Dendritic cell treated with granulocyte-macrophage colony-stimulating factor and Interleukin-4, amounts not matched to agents 40 ng/mL and 50 ng/mL, for 4 days (primary cell): ENCODE measurements at regions of chr5 and their contacts with region 1.

Region 1: DNA sequence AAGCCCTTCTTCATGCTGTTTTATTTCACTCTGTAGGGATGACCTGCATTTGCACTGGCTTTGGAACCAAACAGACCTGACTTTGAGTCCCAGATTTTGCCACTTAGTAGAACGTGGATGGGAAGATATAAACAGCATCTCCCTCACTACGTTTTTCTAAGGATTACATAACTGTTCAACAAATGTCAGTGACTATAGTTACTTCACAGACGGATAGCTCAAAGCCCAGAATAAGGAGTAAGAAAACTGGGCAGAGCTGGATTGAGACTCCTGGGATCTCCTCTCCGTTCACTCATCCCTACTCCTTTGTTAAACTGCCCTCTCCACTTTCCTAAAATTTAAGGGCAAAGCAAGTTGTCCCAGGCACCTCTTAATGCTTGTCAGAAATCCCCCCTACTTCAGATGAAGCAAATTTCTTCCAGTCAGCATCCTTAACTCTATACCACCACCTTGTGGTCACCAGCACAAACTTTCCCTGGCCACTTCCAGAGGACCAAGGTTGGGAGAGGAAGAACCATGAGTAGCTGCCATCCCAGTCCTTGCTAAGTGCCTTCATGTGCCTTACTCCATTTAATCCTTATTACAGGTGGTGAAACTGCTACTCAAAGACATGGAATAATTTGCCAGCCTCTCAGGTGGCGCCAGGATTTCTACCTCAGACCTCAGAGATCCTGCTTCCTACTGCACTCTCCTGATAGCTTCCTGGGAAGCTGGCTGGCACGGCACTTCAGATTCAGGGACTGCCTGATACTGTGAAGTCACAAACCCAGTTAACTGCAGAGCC is 38.4 kb downstream of the EGR1 start:
- H3K4me3 Mint-ChIP-seq: no peak overlapping the region
- H3K27ac Mint-ChIP-seq: no peak overlapping the region
- H3K4me1 Mint-ChIP-seq: no peaks in the 10 kb centered on the region
- H3K27me3 Mint-ChIP-seq: no peaks in the 10 kb centered on the region

Region 2: GRCh38 chr5:138274189-138274853 is 229.4 kb before region 1 on chr5 and contains the start of gene GFRA3:
- intact Hi-C with region 1: no loop called
- H3K4me3 Mint-ChIP-seq: peak within 1 kb of the TSS; percentile 15
- H3K27ac Mint-ChIP-seq: no peak within 1 kb of the TSS
- H3K4me1 Mint-ChIP-seq: peaks cover 6% of the 10 kb centered on the region
- H3K27me3 Mint-ChIP-seq: peaks cover 30% of the 10 kb centered on the region

Region 3: GRCh38 chr5:138449501-138450239 is 54.0 kb before region 1 on chr5:
- intact Hi-C with region 1: loop called (anchors 1 kb)
- H3K4me3 Mint-ChIP-seq: peak overlapping the region; percentile 21
- H3K27ac Mint-ChIP-seq: no peak overlapping the region
- H3K4me1 Mint-ChIP-seq: peaks cover 8% of the 10 kb centered on the region
- H3K27me3 Mint-ChIP-seq: peaks cover 20% of the 10 kb centered on the region

Region 4: DNA sequence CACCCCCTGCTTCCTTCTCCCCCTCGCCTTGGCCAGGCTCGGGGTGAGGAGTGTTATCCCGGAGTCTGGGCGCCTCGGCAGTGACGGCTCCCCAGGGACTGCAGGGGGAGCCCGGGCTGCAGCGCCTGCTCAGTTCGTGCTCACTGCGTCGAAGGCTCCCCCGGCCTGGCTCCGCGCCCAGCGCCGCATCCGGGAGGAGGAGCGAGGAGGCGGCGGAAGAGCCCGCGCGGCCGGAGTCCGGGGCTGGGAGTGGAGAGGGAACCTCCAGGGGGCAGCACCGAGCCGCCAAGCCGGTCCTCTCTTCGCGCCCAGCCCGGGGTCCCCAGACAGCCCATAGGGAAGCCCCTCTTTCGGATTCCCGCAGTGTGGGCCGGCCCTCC is 39.7 kb before region 1 on chr5:
- intact Hi-C with region 1: loop called (anchors 1 kb)
- H3K4me3 Mint-ChIP-seq: peak overlapping the region; percentile 81
- H3K27ac Mint-ChIP-seq: peak overlapping the region; percentile 97
- H3K4me1 Mint-ChIP-seq: peaks cover 60% of the 10 kb centered on the region
- H3K27me3 Mint-ChIP-seq: peaks cover 27% of the 10 kb centered on the region

Region 5: GRCh38 chr5:140202078-140202477 is 1698.4 kb after region 1 on chr5:
- intact Hi-C with region 1: no loop called
- H3K4me3 Mint-ChIP-seq: no peak overlapping the region
- H3K27ac Mint-ChIP-seq: no peak overlapping the region
- H3K4me1 Mint-ChIP-seq: peaks cover 54% of the 10 kb centered on the region
- H3K27me3 Mint-ChIP-seq: no peaks in the 10 kb centered on the region